Head of caudate nucleus (tissue), 42 donors: ENCODE measurements at regions of chr7 and their contacts with region 1.

Region 1: DNA sequence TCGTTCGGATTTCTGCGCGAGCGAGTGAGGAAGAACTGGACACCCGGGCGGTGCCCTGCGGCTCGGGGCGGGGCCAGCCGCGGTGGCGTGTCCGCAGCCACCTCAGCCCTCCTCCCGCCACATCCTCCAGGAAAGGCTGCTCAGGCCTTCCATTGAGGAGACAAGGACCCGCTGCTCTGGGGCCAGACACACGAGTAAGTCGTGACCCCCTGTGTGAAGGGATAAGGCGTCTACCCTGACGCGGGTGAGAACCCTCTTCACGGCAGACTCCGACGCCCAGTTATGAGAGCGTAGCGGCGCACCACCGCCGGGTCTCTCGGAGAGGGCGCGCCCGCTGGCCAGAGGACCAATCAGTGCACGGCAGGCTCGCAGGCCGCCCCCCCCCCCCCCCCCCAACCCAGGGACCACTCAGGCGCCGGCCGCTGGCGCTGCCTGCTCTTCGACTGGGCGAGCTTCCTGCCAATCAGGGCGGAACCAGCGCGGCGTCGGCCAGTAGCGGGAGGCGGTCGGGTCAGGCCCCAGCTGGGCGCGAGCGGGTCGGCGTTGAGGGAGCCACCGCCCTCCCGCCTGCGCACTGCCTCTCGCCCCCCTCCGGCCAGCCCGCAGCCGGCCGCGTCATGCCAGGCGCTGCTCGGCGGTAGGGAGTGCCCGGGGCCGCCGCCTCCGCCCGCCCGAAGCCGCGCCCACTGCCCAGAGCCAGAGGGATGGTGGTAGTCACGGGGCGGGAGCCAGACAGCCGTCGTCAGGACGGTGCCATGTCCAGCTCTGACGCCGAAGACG is at the start of gene KCTD7:
- DNase-seq: peak; percentile 92 to 100 (median 99)

Region 2: DNA sequence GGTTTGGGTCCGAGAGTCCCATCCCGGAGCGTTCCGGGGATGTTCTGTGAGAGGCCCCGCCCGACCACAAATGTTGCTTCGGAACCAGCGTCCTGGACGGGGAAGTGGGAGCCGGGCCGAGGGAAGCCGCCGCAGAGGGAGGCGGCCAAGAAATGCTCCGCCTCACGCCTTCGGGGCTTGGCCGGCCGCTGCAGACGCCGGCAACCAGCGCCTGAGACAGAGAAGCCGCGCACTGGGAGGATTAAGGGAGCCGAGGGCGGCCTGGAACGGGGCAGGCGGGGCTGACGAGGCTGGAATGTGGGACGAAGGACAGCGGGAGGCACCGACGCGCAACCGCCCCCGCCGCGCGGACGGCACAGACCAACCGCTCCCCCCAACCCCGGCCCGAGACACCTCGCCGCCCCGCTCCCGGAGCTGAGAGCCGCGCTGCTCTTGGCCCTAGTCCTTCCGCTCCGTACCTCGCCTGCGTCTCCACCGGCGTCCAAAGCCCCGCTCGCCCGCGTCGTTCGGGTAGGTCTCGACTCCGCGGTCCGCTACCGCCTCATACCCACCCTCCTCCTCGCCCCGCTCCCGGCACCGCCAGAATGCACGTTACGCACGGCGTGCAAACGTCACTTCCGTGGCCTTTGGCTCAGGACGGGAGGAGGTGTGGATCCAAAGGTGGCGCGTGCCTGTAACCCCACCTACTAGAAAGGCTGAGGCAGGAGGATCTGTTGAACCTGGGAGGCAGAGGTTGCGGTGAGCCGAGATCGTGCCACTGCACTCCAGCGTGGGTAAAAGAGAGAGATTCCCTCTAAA is 36.6 kb before region 1 on chr7:
- intact Hi-C with region 1: loop called (anchors 5 kb)
- DNase-seq: peak; percentile 90 to 97 (median 95)

Region 3: DNA sequence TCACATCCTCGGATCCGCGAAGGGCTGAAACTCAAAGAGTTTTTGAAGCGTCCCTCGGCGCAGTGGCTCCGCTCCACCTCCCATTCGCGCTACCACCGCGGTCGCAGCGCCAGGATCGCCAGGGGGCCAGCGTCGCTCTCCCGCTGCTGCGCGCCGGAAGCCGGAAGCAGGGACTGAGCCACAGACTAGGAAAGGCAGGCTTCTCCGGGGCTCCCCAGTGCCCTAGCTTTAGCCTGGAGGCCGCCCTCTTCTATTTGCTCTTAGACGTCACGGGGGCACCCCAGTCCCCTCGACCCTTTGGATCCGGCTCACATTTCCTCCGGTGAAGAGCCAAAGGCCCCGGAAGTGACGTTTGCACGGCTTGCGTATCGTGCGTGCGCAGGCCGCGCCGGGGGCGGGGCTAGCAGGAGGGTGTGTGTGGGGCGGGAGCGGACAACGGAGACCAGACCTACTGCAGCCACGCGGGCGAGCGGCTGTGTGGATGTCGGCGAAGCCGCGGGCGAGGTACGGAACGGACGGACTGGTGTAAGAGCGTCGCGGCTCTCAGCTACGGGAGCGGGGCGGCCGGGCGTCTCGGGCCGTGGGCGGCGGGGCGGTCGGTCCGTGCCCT is 25.7 kb after region 1 on chr7:
- intact Hi-C with region 1: loop called (anchors 2 kb)
- DNase-seq: peak; percentile 97 to 100 (median 99)